ENCODE measurements at regions of chr17 and their contacts with region 1.

Region 1: GRCh38 chr17:5237541-5238016 is 2.9 kb upstream of the SCIMP start:
- DNase-seq: peak; percentile 46 to 86
- H3K4me3 ChIP-seq: no peak overlapping the region
- H3K27ac ChIP-seq: no peak overlapping the region
- H3K4me1 ChIP-seq: no peaks in the 10 kb centered on the region
- H3K27me3 ChIP-seq: no peaks in the 10 kb centered on the region
- CTCF ChIP-seq: peak; percentile 78 to 97 (median 85)
- EP300 ChIP-seq: no peak
- POLR2A ChIP-seq: no peak
- RAD21 ChIP-seq: peak; percentile 67 to 75

Region 2: GRCh38 chr17:5198472-5198871 is 39.1 kb before region 1 on chr17:
- CTCF ChIA-PET with region 1: interaction called, 14 read pairs
- POLR2A ChIA-PET with region 1: no interaction called
- DNase-seq: no peak
- H3K4me3 ChIP-seq: no peak overlapping the region
- H3K27ac ChIP-seq: no peak overlapping the region
- H3K4me1 ChIP-seq: no peaks in the 10 kb centered on the region
- H3K27me3 ChIP-seq: no peaks in the 10 kb centered on the region; a peak in 1 of 7 replicates
- CTCF ChIP-seq: no peak
- EP300 ChIP-seq: no peak
- POLR2A ChIP-seq: no peak
- RAD21 ChIP-seq: no peak

Region 3: GRCh38 chr17:5226940-5227878 is 10.4 kb before region 1 on chr17:
- CTCF ChIA-PET with region 1: interaction called, 20 read pairs
- POLR2A ChIA-PET with region 1: no interaction called
- DNase-seq: no peak
- H3K4me3 ChIP-seq: no peak overlapping the region
- H3K27ac ChIP-seq: no peak overlapping the region
- H3K4me1 ChIP-seq: no peaks in the 10 kb centered on the region
- H3K27me3 ChIP-seq: no peaks in the 10 kb centered on the region; a peak in 1 of 7 replicates
- CTCF ChIP-seq: no peak
- EP300 ChIP-seq: no peak
- POLR2A ChIP-seq: no peak
- RAD21 ChIP-seq: no peak

Region 4: DNA sequence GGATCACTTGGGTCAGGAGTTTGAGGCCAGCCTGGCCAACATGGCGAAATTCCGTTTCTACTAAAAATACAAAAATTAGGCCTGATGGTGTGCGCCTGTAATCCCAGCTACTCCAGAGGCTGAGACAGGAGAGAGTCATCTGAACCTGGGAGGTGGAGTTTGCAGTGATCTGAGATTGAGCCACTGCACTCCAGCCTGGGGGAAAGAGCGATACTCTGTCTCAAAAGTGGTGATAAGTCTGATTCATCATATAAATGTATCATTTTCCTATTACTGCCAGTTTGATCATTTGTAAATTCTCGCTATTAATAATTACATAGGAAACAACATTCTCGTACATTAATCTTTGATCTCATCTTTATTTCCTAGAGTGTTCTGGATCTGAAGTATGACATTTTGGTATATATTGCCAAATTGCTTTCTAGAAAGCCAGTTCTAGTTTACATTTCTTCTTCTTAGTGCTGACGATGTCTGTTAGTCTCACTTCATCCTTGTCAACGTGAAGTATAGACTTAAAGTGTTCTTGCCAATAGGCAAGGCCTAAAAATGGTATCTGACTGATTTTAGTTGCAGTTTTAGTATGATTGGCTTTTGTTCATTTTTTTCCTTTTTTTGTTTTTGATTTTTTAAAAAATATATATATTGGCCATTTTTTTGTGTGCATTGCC is 54.2 kb after region 1 on chr17:
- CTCF ChIA-PET with region 1: no interaction called
- POLR2A ChIA-PET with region 1: no interaction called
- DNase-seq: no peak
- H3K4me3 ChIP-seq: no peak overlapping the region
- H3K27ac ChIP-seq: no peak overlapping the region
- H3K4me1 ChIP-seq: peaks cover under 1 to 6% (median 4%) of the 10 kb centered on the region in 4 experiments; a peak in 4 of 7 replicates
- H3K27me3 ChIP-seq: no peaks in the 10 kb centered on the region
- CTCF ChIP-seq: no peak
- EP300 ChIP-seq: no peak
- POLR2A ChIP-seq: no peak
- RAD21 ChIP-seq: no peak